ENCODE measurements at regions of chrX and their contacts with region 1.

Region 1: GRCh38 chrX:120790118-120790517 is 85.5 kb downstream of the CT47B1 start:
- DNase-seq: peak in 7 of 9 donors; percentile 35 to 73 (median 62)
- ATAC-seq: peak; percentile 71
- H3K4me3 ChIP-seq: no peak overlapping the region
- H3K4me3 Mint-ChIP-seq: peak overlapping the region in 9 of 10 donors; percentile 44 to 76 (median 65)
- H3K27ac ChIP-seq: no peak overlapping the region
- H3K27ac Mint-ChIP-seq: peak overlapping the region in 8 of 9 donors; percentile 56 to 80 (median 66)
- H3K4me1 ChIP-seq: no peaks in the 10 kb centered on the region
- H3K4me1 Mint-ChIP-seq: peaks cover 5 to 22% (median 17%) of the 10 kb centered on the region in 7 donors
- H3K27me3 ChIP-seq: no peaks in the 10 kb centered on the region
- H3K27me3 Mint-ChIP-seq: no peaks in the 10 kb centered on the region

Region 2: GRCh38 chrX:120813982-120814381 is 23.9 kb after region 1 on chrX:
- CTCF ChIA-PET with region 1: no interaction called
- POLR2A ChIA-PET with region 1: no interaction called
- intact Hi-C with region 1: no loop called
- DNase-seq: no peak
- ATAC-seq: no peak
- H3K4me3 ChIP-seq: no peak overlapping the region
- H3K4me3 Mint-ChIP-seq: no peak overlapping the region
- H3K27ac ChIP-seq: no peak overlapping the region
- H3K27ac Mint-ChIP-seq: no peak overlapping the region
- H3K4me1 ChIP-seq: no peaks in the 10 kb centered on the region
- H3K4me1 Mint-ChIP-seq: no peaks in the 10 kb centered on the region
- H3K27me3 ChIP-seq: no peaks in the 10 kb centered on the region
- H3K27me3 Mint-ChIP-seq: no peaks in the 10 kb centered on the region

Region 3: GRCh38 chrX:120840827-120841226 is 50.7 kb after region 1 on chrX:
- CTCF ChIA-PET with region 1: no interaction called
- POLR2A ChIA-PET with region 1: no interaction called
- intact Hi-C with region 1: loop called in 1 of 2 experiments (anchors 5 kb)
- DNase-seq: no peak
- ATAC-seq: no peak
- H3K4me3 ChIP-seq: no peak overlapping the region
- H3K4me3 Mint-ChIP-seq: no peak overlapping the region
- H3K27ac ChIP-seq: no peak overlapping the region
- H3K27ac Mint-ChIP-seq: peak overlapping the region in 1 of 9 donors; percentile 4
- H3K4me1 ChIP-seq: no peaks in the 10 kb centered on the region
- H3K4me1 Mint-ChIP-seq: no peaks in the 10 kb centered on the region
- H3K27me3 ChIP-seq: no peaks in the 10 kb centered on the region
- H3K27me3 Mint-ChIP-seq: no peaks in the 10 kb centered on the region

Region 4: DNA sequence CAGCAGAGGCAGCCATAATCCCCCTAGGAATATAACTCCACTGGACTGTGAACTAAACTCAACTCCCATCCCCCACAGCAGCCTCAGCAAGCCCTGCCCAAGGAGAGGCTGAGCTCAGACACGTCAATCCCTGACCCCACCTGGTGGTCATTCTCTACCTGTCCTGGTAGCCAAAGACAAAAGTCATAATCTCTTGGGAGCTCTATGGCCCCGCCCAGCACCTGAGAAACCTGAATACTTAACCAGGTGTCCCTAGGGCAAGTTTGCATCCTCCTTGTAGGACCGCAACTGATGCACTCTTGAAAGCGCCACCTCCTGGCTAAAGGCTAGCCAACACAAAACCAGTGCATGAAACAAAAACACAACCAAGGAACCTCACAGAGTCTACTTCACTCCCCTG is 67.1 kb after region 1 on chrX:
- CTCF ChIA-PET with region 1: interaction called, 7 read pairs
- POLR2A ChIA-PET with region 1: no interaction called
- intact Hi-C with region 1: loop called in 1 of 2 experiments (anchors 1 kb)
- DNase-seq: no peak
- ATAC-seq: no peak
- H3K4me3 ChIP-seq: no peak overlapping the region
- H3K4me3 Mint-ChIP-seq: no peak overlapping the region
- H3K27ac ChIP-seq: no peak overlapping the region
- H3K27ac Mint-ChIP-seq: no peak overlapping the region
- H3K4me1 ChIP-seq: no peaks in the 10 kb centered on the region
- H3K4me1 Mint-ChIP-seq: peaks cover 0 to 18% (median 10%) of the 10 kb centered on the region in 7 donors
- H3K27me3 ChIP-seq: no peaks in the 10 kb centered on the region
- H3K27me3 Mint-ChIP-seq: no peaks in the 10 kb centered on the region

Region 5: GRCh38 chrX:121308276-121308805 is 518.2 kb after region 1 on chrX:
- CTCF ChIA-PET with region 1: no interaction called
- POLR2A ChIA-PET with region 1: no interaction called
- intact Hi-C with region 1: loop called (anchors 2 to 5 kb)
- DNase-seq: peak in 2 of 9 donors; percentile 7 to 57
- ATAC-seq: no peak
- H3K4me3 ChIP-seq: no peak overlapping the region
- H3K4me3 Mint-ChIP-seq: peak overlapping the region in 2 of 10 donors; percentile 24 to 79
- H3K27ac ChIP-seq: no peak overlapping the region
- H3K27ac Mint-ChIP-seq: peak overlapping the region in 3 of 9 donors; percentile 3 to 94 (median 52)
- H3K4me1 ChIP-seq: no peaks in the 10 kb centered on the region
- H3K4me1 Mint-ChIP-seq: peaks cover 0 to 20% (median 4%) of the 10 kb centered on the region in 7 donors
- H3K27me3 ChIP-seq: no peaks in the 10 kb centered on the region
- H3K27me3 Mint-ChIP-seq: no peaks in the 10 kb centered on the region

Region 6: DNA sequence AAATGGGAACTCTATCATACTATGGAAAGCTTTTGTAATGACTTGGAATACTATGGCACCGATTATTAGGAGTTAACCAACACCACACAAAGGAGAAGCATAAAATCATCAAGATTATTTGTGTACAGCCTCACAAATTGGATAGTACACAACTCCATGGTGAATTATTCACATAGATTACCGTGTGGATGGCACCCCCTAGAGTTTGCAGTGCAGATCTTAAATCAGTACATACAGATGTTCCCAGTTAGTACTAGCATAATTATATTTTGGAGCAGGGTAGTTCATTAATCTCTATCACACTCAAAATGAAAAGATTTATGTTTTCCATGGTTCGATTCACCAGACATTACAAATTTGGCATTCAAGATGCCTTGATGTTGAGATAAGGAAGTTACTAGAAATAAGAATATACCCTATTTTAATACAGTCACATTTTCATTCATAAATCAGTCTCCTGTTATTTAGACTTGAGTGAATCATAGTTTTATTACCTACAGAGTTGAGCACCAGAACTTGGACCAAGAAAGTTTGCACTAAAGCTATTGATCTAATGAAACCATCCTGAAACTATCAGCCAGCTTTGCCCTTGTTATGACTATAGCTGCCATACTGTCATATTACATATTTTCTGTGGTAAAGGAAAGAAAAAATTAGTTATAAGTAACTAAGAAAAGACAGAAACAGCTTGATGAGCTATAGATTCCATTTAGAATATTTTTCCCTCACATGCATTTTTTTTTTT is 789.1 kb after region 1 on chrX:
- CTCF ChIA-PET with region 1: no interaction called
- POLR2A ChIA-PET with region 1: no interaction called
- intact Hi-C with region 1: loop called in 1 of 2 experiments (anchors 1 kb)
- DNase-seq: peak in 1 of 9 donors; percentile 1
- ATAC-seq: no peak
- H3K4me3 ChIP-seq: no peak overlapping the region
- H3K4me3 Mint-ChIP-seq: no peak overlapping the region
- H3K27ac ChIP-seq: no peak overlapping the region
- H3K27ac Mint-ChIP-seq: no peak overlapping the region
- H3K4me1 ChIP-seq: no peaks in the 10 kb centered on the region
- H3K4me1 Mint-ChIP-seq: no peaks in the 10 kb centered on the region
- H3K27me3 ChIP-seq: no peaks in the 10 kb centered on the region
- H3K27me3 Mint-ChIP-seq: no peaks in the 10 kb centered on the region

Measured in naive thymus-derived CD4-positive, alpha-beta T cell (primary cell).